HepG2 (cell line): ENCODE measurements at regions of chr11 and their contacts with region 1.

Region 1: GRCh38 chr11:67345920-67346799 is 7.2 kb downstream of the POLD4 start:
- DNase-seq: peak; percentile 32
- ATAC-seq: peak; percentile 67
- H3K4me3 ChIP-seq: no peak overlapping the region
- H3K27ac ChIP-seq: no peak overlapping the region
- H3K4me1 ChIP-seq: peaks cover 16% of the 10 kb centered on the region
- H3K27me3 ChIP-seq: no peaks in the 10 kb centered on the region
- CTCF ChIP-seq: peak; percentile 48
- EP300 ChIP-seq: peak in 1 of 2 experiments; percentile 17; a peak in 1 of 4 replicates
- POLR2A ChIP-seq: no peak
- RAD21 ChIP-seq: no peak

Region 2: GRCh38 chr11:67332081-67332691 is 14.0 kb before region 1 on chr11:
- CTCF ChIA-PET with region 1: no interaction called
- POLR2A ChIA-PET with region 1: no interaction called
- in situ Hi-C with region 1: no loop called
- intact Hi-C with region 1: no loop called
- DNase-seq: no peak
- ATAC-seq: no peak
- H3K4me3 ChIP-seq: no peak overlapping the region
- H3K27ac ChIP-seq: no peak overlapping the region
- H3K4me1 ChIP-seq: no peaks in the 10 kb centered on the region
- H3K27me3 ChIP-seq: no peaks in the 10 kb centered on the region
- CTCF ChIP-seq: no peak
- EP300 ChIP-seq: no peak
- POLR2A ChIP-seq: no peak
- RAD21 ChIP-seq: no peak

Region 3: DNA sequence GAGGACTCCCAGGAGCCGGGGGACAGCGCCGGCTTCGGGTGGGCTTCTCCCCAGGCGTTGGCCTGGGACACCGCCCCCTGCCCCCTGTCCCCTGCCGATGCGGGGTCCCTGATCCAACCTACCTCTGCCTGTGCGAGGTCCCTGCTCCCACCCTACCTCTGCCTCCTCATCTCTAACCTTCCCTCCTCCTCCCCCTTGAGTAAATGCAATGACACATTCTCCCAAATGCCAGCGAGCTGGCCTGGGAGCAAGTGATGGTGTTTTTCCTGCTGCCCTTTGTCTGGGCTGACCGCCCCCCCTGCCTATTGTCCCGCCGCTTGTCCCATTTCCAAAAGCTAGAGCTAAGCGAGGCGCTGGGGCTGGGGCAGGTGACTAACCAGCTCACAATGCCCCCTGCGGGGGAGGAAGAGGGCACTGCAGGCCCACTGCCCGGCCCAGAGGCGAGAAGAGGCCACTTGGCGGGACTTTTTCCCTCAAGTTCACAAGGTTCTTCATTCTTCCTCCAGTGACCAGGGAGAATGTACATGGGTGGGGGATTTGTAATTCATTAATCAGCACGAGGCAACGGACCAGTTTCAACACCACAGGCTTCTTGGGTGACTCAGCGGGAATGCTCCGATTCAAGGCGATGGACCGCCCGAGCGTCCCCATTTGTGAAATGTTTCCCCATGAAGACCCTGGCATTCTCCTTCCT is 27.9 kb after region 1 on chr11:
- CTCF ChIA-PET with region 1: interaction called, 3 read pairs
- POLR2A ChIA-PET with region 1: interaction called, 365 read pairs
- in situ Hi-C with region 1: no loop called
- intact Hi-C with region 1: no loop called
- DNase-seq: peak; percentile 82
- ATAC-seq: peak; percentile 65
- H3K4me3 ChIP-seq: peak overlapping the region; percentile 69 to 75 (median 75)
- H3K27ac ChIP-seq: no peak overlapping the region
- H3K4me1 ChIP-seq: peaks cover 32% of the 10 kb centered on the region
- H3K27me3 ChIP-seq: peaks cover 3 to 8% of the 10 kb centered on the region in 2 experiments; a peak in 3 of 5 replicates
- CTCF ChIP-seq: peak; percentile 72
- EP300 ChIP-seq: peak in 1 of 2 experiments; percentile 5; a peak in 1 of 4 replicates
- POLR2A ChIP-seq: no peak
- RAD21 ChIP-seq: peak; percentile 38